MCF 10A (cell line): ENCODE measurements at regions of chr20 and their contacts with region 1.

Region 1: DNA sequence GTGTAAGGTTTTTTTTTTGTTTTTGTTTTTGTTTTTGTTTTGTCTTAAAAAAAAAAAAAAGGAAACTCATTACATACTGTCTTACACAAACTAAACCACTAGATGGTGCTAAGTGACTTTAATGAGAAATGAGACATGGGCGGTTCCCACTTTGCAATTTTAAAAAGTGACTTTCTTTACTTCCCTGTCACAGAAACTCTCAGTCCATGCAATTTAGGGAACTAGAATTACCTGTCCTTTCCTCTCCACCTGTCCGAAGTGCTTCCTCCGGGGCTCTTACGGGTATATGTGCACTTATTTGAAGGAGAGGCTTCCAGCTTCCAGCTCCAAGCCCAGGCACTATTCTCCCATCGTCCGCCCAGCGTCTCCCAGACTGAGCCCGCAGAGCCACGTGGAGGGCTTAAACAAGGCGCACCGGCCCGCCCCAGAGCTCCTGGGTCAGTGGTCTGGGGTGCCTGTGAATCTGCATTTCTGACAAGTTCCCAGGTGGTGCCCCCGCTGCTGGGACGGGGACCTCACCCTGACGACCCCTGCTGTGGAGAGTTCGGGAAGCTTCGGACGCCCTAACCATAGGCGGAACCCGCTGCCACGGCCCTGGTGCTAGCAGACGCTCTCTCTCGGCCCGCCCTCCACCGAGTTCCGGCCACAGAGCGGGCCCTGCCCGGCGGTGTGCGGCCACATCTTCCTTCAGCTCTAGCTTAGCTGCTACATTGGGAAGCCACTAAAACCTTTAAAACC is 26.1 kb downstream of the BFSP1 start:
- DNase-seq: peak; percentile 74
- H3K4me3 Mint-ChIP-seq: peak overlapping the region; percentile 74
- H3K27ac Mint-ChIP-seq: peak overlapping the region; percentile 65
- H3K4me1 Mint-ChIP-seq: peaks cover 17% of the 10 kb centered on the region
- H3K27me3 Mint-ChIP-seq: no peaks in the 10 kb centered on the region
- CTCF ChIP-seq: peak; percentile 50

Region 2: GRCh38 chr20:17226410-17227218 is 278.5 kb before region 1 on chr20 and contains the start of gene PCSK2:
- CTCF ChIA-PET with region 1: no interaction called
- POLR2A ChIA-PET with region 1: no interaction called
- intact Hi-C with region 1: no loop called
- DNase-seq: no peak
- H3K4me3 Mint-ChIP-seq: no peak within 1 kb of the TSS
- H3K27ac Mint-ChIP-seq: no peak within 1 kb of the TSS
- H3K4me1 Mint-ChIP-seq: no peaks in the 10 kb centered on the region
- H3K27me3 Mint-ChIP-seq: peaks cover 81% of the 10 kb centered on the region
- CTCF ChIP-seq: no peak
- total RNA-seq, gene PCSK2: not detected in 2 replicates

Region 3: GRCh38 chr20:17518339-17519052 is 13.4 kb after region 1 on chr20:
- CTCF ChIA-PET with region 1: interaction called, 26 read pairs
- POLR2A ChIA-PET with region 1: interaction called, 3 read pairs
- intact Hi-C with region 1: no loop called
- DNase-seq: no peak
- H3K4me3 Mint-ChIP-seq: no peak overlapping the region
- H3K27ac Mint-ChIP-seq: no peak overlapping the region
- H3K4me1 Mint-ChIP-seq: peaks cover 6% of the 10 kb centered on the region
- H3K27me3 Mint-ChIP-seq: no peaks in the 10 kb centered on the region
- CTCF ChIP-seq: no peak

Region 4: GRCh38 chr20:17536944-17537444 is 31.9 kb after region 1 on chr20:
- CTCF ChIA-PET with region 1: interaction called, 39 read pairs
- POLR2A ChIA-PET with region 1: interaction called, 10 read pairs
- intact Hi-C with region 1: loop called (anchors 2 kb)
- DNase-seq: peak; percentile 83
- H3K4me3 Mint-ChIP-seq: no peak overlapping the region
- H3K27ac Mint-ChIP-seq: no peak overlapping the region
- H3K4me1 Mint-ChIP-seq: peaks cover 20% of the 10 kb centered on the region
- H3K27me3 Mint-ChIP-seq: no peaks in the 10 kb centered on the region
- CTCF ChIP-seq: peak; percentile 84

Region 5: GRCh38 chr20:17569616-17570346 is 64.7 kb after region 1 on chr20 and contains the start of gene DSTN:
- CTCF ChIA-PET with region 1: interaction called, 24 read pairs
- POLR2A ChIA-PET with region 1: interaction called, 34 read pairs
- intact Hi-C with region 1: loop called (anchors 2 kb)
- DNase-seq: peak; percentile 94
- H3K4me3 Mint-ChIP-seq: peak within 1 kb of the TSS; percentile 94
- H3K27ac Mint-ChIP-seq: peak within 1 kb of the TSS; percentile 99
- H3K4me1 Mint-ChIP-seq: peaks cover 37% of the 10 kb centered on the region
- H3K27me3 Mint-ChIP-seq: no peaks in the 10 kb centered on the region
- CTCF ChIP-seq: no peak
- total RNA-seq, gene DSTN: 217 and 280 TPM in 2 replicates

Region 6: DNA sequence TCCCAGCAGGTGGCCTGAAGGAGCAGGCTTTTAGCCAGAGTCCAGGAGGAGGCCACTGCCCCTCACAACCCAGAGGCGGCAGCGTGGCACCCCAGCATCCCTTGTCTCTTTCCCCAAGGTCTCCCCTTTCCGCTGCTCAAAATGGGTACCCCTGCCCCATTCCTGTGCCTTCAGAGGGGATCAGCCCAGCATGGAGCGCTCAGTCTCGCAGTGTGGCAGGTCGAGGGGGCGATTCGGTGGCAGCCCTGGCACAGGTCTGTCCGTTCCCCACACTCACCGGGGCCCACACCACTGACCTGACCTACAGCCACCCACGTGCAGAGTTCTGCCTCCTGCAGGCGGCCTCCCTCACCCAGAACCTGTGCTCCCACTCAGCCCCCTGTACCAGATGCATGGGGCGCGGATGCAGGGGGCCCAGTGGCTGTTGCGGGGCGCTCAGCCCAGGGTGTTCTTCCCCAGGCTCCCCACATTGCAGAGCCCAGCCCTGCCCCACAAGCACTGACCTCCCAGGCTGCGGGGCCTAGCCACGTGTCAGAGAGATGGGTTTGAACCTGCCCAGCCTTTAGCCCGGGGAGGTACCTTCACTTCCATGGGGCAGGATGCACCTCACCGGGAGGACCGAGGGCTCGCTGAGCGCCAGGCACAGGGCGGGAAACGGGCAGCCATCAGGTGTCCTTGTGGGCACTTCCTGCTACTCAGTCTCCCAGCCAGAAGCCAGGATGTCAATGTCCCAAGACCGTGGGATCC is 106.6 kb after region 1 on chr20:
- CTCF ChIA-PET with region 1: interaction called, 78 read pairs
- POLR2A ChIA-PET with region 1: no interaction called
- intact Hi-C with region 1: no loop called
- DNase-seq: peak; percentile 68
- H3K4me3 Mint-ChIP-seq: no peak overlapping the region
- H3K27ac Mint-ChIP-seq: peak overlapping the region; percentile 93
- H3K4me1 Mint-ChIP-seq: peaks cover 7% of the 10 kb centered on the region
- H3K27me3 Mint-ChIP-seq: no peaks in the 10 kb centered on the region
- CTCF ChIP-seq: no peak

Region 7: GRCh38 chr20:17654649-17655285 is 149.7 kb after region 1 on chr20:
- CTCF ChIA-PET with region 1: interaction called, 18 read pairs
- POLR2A ChIA-PET with region 1: no interaction called
- intact Hi-C with region 1: no loop called
- DNase-seq: peak; percentile 39
- H3K4me3 Mint-ChIP-seq: no peak overlapping the region
- H3K27ac Mint-ChIP-seq: no peak overlapping the region
- H3K4me1 Mint-ChIP-seq: peaks cover 15% of the 10 kb centered on the region
- H3K27me3 Mint-ChIP-seq: no peaks in the 10 kb centered on the region
- CTCF ChIP-seq: peak; percentile 44

Region 8: GRCh38 chr20:17968366-17969279 is 463.6 kb after region 1 on chr20 and contains the starts of genes MGME1 and SNX5:
- CTCF ChIA-PET with region 1: interaction called, 7 read pairs
- POLR2A ChIA-PET with region 1: interaction called, 40 read pairs
- intact Hi-C with region 1: no loop called
- DNase-seq: peak; percentile 99
- H3K4me3 Mint-ChIP-seq: peak within 1 kb of the TSS; percentile 95
- H3K27ac Mint-ChIP-seq: peak within 1 kb of the TSS; percentile 98
- H3K4me1 Mint-ChIP-seq: peaks cover 39% of the 10 kb centered on the region
- H3K27me3 Mint-ChIP-seq: no peaks in the 10 kb centered on the region
- CTCF ChIP-seq: no peak
- total RNA-seq, gene MGME1: 18.0 and 24.0 TPM in 2 replicates
- total RNA-seq, gene SNX5: 108 and 170 TPM in 2 replicates